Gastrocnemius medialis (tissue), 4 donors: ENCODE measurements at regions of chr20 and their contacts with region 1.

Region 1: GRCh38 chr20:24545168-24545567 is 75.7 kb downstream of the SYNDIG1 start:
- DNase-seq: no peak
- ATAC-seq: no peak
- H3K4me3 ChIP-seq: no peak overlapping the region
- H3K27ac ChIP-seq: no peak overlapping the region
- H3K4me1 ChIP-seq: no peaks in the 10 kb centered on the region
- H3K27me3 ChIP-seq: no peaks in the 10 kb centered on the region
- CTCF ChIP-seq: no peak
- POLR2A ChIP-seq: no peak

Region 2: GRCh38 chr20:24066076-24066700 is 479.0 kb before region 1 on chr20:
- in situ Hi-C with region 1: no loop called
- intact Hi-C with region 1: loop called (anchors 5 kb)
- DNase-seq: no peak
- ATAC-seq: no peak
- H3K4me3 ChIP-seq: no peak overlapping the region
- H3K27ac ChIP-seq: no peak overlapping the region
- H3K4me1 ChIP-seq: no peaks in the 10 kb centered on the region
- H3K27me3 ChIP-seq: no peaks in the 10 kb centered on the region
- CTCF ChIP-seq: no peak
- POLR2A ChIP-seq: no peak

Region 3: GRCh38 chr20:24584538-24585356 is 39.6 kb after region 1 on chr20:
- in situ Hi-C with region 1: no loop called
- intact Hi-C with region 1: no loop called
- DNase-seq: no peak
- ATAC-seq: no peak
- H3K4me3 ChIP-seq: no peak overlapping the region
- H3K27ac ChIP-seq: no peak overlapping the region
- H3K4me1 ChIP-seq: no peaks in the 10 kb centered on the region
- H3K27me3 ChIP-seq: no peaks in the 10 kb centered on the region
- CTCF ChIP-seq: no peak
- POLR2A ChIP-seq: no peak